ENCODE measurements at regions of chr13 and their contacts with region 1.

Region 1: GRCh38 chr13:53782488-53782961 is 753.9 kb downstream of the OLFM4 start:
- DNase-seq: peak; percentile 67
- ATAC-seq: peak; percentile 77
- H3K4me3 ChIP-seq: peak overlapping the region; percentile 44; the same call in 1 of the 2 replicates
- H3K27ac ChIP-seq: no peak overlapping the region
- H3K4me1 ChIP-seq: no peaks in the 10 kb centered on the region
- H3K27me3 ChIP-seq: no peaks in the 10 kb centered on the region
- CTCF ChIP-seq: peak; percentile 63

Region 2: GRCh38 chr13:53250266-53250875 is 532.2 kb before region 1 on chr13:
- CTCF ChIA-PET with region 1: interaction called, 19 read pairs
- POLR2A ChIA-PET with region 1: no interaction called
- intact Hi-C with region 1: loop called (anchors 1 kb)
- DNase-seq: peak; percentile 79
- ATAC-seq: peak; percentile 67
- H3K4me3 ChIP-seq: no peak overlapping the region
- H3K27ac ChIP-seq: no peak overlapping the region
- H3K4me1 ChIP-seq: no peaks in the 10 kb centered on the region
- H3K27me3 ChIP-seq: no peaks in the 10 kb centered on the region
- CTCF ChIP-seq: peak; percentile 83

Region 3: DNA sequence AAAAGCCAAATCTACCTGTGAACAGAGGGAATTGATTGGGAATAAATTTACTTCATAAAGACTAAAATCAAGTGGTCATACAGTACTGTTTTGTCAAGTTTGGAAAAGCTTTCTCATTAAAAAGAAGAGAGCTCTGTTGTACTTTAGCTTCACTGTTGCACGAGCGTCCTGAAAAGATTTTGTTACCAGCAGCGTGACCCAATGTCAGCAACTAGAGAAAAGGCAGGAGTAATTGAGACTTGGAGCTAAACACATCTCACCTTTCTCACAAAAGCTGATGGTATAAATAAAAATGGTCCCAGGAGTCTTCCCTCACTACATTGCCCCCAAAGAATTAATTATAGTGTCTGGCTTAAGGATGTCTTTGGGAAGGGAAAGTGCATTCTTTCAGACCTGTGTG is 140.2 kb before region 1 on chr13:
- CTCF ChIA-PET with region 1: no interaction called
- POLR2A ChIA-PET with region 1: no interaction called
- intact Hi-C with region 1: no loop called
- DNase-seq: no peak
- ATAC-seq: no peak
- H3K4me3 ChIP-seq: no peak overlapping the region
- H3K27ac ChIP-seq: no peak overlapping the region
- H3K4me1 ChIP-seq: no peaks in the 10 kb centered on the region
- H3K27me3 ChIP-seq: no peaks in the 10 kb centered on the region
- CTCF ChIP-seq: no peak

Region 4: DNA sequence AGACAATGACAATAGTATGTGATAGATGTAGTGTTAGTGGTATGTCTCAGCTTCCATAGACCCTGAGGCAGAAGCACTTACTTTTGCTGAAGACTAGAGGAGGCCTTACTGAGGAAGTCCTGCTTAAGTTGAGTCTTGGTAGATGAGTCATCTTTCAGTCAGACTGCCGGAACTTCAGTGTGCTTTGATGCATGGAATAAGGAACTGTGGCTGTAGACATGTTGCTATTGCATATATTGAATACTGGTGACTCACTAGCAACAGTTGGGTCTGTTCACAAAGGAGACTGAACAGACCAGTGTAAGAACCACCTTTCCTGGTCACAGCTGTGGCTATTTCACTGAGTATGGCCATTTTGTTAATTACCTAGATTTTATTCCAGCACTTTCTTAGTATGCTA is 246.7 kb after region 1 on chr13:
- CTCF ChIA-PET with region 1: no interaction called
- POLR2A ChIA-PET with region 1: no interaction called
- intact Hi-C with region 1: loop called (anchors 1 kb)
- DNase-seq: peak; percentile 67
- ATAC-seq: peak; percentile 100
- H3K4me3 ChIP-seq: no peak overlapping the region
- H3K27ac ChIP-seq: peak overlapping the region; percentile 10; the same call in 1 of the 2 replicates
- H3K4me1 ChIP-seq: no peaks in the 10 kb centered on the region
- H3K27me3 ChIP-seq: no peaks in the 10 kb centered on the region
- CTCF ChIP-seq: no peak

Region 5: GRCh38 chr13:54110597-54110996 is 328.1 kb after region 1 on chr13:
- CTCF ChIA-PET with region 1: interaction called, 3 read pairs
- POLR2A ChIA-PET with region 1: no interaction called
- intact Hi-C with region 1: loop called (anchors 5 kb)
- DNase-seq: no peak
- ATAC-seq: no peak
- H3K4me3 ChIP-seq: no peak overlapping the region
- H3K27ac ChIP-seq: no peak overlapping the region
- H3K4me1 ChIP-seq: no peaks in the 10 kb centered on the region
- H3K27me3 ChIP-seq: no peaks in the 10 kb centered on the region
- CTCF ChIP-seq: no peak

Region 6: GRCh38 chr13:54536112-54536511 is 753.6 kb after region 1 on chr13:
- CTCF ChIA-PET with region 1: no interaction called
- POLR2A ChIA-PET with region 1: no interaction called
- intact Hi-C with region 1: loop called (anchors 10 kb)
- DNase-seq: peak; percentile 2
- ATAC-seq: no peak
- H3K4me3 ChIP-seq: no peak overlapping the region
- H3K27ac ChIP-seq: no peak overlapping the region
- H3K4me1 ChIP-seq: no peaks in the 10 kb centered on the region
- H3K27me3 ChIP-seq: no peaks in the 10 kb centered on the region
- CTCF ChIP-seq: peak; percentile 40